Sigmoid colon (tissue), 7 donors: ENCODE measurements at regions of chr3 and their contacts with region 1.

Region 1: DNA sequence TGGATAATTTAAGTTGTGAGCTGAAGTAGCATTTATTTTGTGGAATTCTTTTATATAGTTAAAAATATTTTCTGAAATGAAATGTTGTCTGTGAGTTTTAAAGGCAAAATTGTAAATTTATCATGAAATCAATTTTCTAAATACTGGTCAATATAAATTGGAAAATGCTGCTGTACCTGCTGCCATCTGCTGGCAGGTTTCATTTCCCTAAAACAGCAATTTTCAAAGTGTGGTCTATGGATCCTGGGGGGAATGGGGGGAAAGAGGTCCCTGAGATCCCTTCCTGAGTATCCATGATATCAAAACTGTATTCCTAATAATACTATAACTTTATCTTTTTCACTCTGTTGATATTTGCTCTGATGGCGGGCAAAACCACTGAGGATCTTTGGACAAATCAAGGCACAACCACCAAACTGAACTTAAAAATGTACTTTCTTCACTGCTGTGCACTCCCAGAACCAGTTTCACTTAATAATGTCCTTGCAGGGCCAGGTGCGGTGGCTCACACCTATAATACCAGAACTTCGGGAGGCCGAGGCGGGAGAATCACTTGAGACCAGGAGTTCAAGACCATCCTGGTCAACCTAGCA is 17.2 kb upstream of the CCR4 start:
- DNase-seq: no peak
- H3K4me3 ChIP-seq: no peak overlapping the region
- H3K27ac ChIP-seq: no peak overlapping the region
- H3K4me1 ChIP-seq: no peaks in the 10 kb centered on the region
- H3K27me3 ChIP-seq: no peaks in the 10 kb centered on the region
- CTCF ChIP-seq: peak in 3 of 4 experiments; percentile 28 to 61 (median 36)
- EP300 ChIP-seq: no peak
- POLR2A ChIP-seq: no peak

Region 2: GRCh38 chr3:32733631-32734229 is 200.5 kb before region 1 on chr3:
- intact Hi-C with region 1: loop called (anchors 10 kb)
- DNase-seq: no peak
- H3K4me3 ChIP-seq: no peak overlapping the region
- H3K27ac ChIP-seq: no peak overlapping the region
- H3K4me1 ChIP-seq: no peaks in the 10 kb centered on the region
- H3K27me3 ChIP-seq: no peaks in the 10 kb centered on the region
- CTCF ChIP-seq: peak in 3 of 4 experiments; percentile 27 to 46 (median 37)
- EP300 ChIP-seq: no peak
- POLR2A ChIP-seq: no peak

Region 3: DNA sequence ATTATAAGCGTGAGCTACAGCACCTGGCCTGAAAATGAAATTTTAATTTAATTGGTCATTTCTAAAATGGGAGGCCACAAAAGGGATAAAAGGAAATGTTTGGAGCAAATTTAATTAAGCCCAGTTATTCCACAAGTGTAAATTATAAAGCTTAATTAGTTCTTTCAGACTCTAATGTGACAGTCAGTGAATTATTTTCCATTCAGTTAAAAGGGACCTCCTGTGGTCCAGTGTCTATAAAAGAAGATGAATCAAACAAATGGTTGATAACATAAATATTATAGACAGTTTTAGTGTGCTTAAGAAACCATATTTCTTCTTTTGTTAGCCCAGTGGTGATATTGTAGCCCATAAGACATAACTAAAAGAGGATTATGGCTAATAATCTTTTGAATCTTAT is 182.9 kb before region 1 on chr3:
- intact Hi-C with region 1: no loop called
- DNase-seq: no peak
- H3K4me3 ChIP-seq: no peak overlapping the region
- H3K27ac ChIP-seq: no peak overlapping the region
- H3K4me1 ChIP-seq: no peaks in the 10 kb centered on the region
- H3K27me3 ChIP-seq: no peaks in the 10 kb centered on the region
- CTCF ChIP-seq: no peak
- EP300 ChIP-seq: no peak
- POLR2A ChIP-seq: no peak

Region 4: GRCh38 chr3:32865405-32865804 is 68.8 kb before region 1 on chr3:
- intact Hi-C with region 1: no loop called
- DNase-seq: no peak
- H3K4me3 ChIP-seq: no peak overlapping the region
- H3K27ac ChIP-seq: no peak overlapping the region
- H3K4me1 ChIP-seq: no peaks in the 10 kb centered on the region
- H3K27me3 ChIP-seq: no peaks in the 10 kb centered on the region
- CTCF ChIP-seq: no peak
- EP300 ChIP-seq: no peak
- POLR2A ChIP-seq: no peak

Region 5: GRCh38 chr3:32901432-32902409 is 32.5 kb before region 1 on chr3:
- intact Hi-C with region 1: no loop called
- DNase-seq: no peak
- H3K4me3 ChIP-seq: no peak overlapping the region
- H3K27ac ChIP-seq: no peak overlapping the region
- H3K4me1 ChIP-seq: no peaks in the 10 kb centered on the region
- H3K27me3 ChIP-seq: peaks cover 0 to 11% (median 0%) of the 10 kb centered on the region in 3 donors
- CTCF ChIP-seq: no peak
- EP300 ChIP-seq: no peak
- POLR2A ChIP-seq: no peak

Region 6: DNA sequence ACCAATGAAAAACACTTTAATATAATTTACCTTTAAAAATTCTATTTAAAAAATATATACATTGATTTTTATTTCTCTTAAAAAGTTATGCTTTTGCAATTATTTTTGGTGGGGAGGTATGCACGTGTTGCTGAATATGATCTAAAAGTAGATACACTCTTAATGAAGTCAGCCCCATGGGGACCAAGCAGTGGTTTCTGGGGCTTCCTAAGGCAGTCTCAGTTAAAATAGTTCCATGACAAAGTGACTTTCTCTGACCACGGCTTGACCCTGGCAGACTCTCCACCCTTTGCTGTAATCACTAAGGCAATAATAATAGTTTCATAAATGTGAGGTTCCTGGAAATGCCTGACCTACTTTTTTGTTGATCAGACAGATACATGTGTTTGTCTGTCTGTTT is 67.6 kb after region 1 on chr3:
- intact Hi-C with region 1: no loop called
- DNase-seq: no peak
- H3K4me3 ChIP-seq: no peak overlapping the region
- H3K27ac ChIP-seq: no peak overlapping the region
- H3K4me1 ChIP-seq: no peaks in the 10 kb centered on the region
- H3K27me3 ChIP-seq: no peaks in the 10 kb centered on the region
- CTCF ChIP-seq: no peak
- EP300 ChIP-seq: no peak
- POLR2A ChIP-seq: no peak